ENCODE measurements at regions of chr18 and their contacts with region 1.

Region 1: DNA sequence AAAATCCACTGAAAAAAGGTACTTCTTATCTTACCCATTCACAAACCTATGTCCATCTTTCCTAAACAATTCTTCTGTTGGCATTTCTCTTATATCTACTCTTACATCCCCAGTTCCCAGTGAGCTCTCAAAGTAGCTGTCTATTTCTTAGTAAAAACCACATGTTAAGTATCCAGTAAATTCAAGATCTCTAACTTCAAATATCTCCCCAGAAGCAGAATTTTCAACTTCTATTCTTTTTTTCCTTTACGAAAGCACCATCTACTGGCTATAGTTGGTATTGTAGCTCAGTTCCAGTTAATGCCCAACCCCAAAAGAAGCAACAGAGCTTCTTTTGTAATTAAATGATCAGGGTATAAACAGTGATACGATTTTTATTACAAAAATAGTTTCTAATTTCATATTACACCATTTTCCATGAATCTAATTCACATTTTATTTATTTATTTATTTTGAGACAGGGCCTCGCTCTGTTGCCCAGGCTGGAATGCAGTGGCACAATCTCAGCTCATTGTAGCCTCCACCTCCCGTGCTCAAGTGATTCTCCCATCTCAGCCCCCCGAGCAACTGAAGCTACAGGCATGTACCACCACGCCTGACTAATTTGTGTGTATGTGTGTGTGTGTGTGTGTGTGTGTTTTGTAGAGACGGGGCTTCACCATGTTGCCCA is 28.5 kb downstream of the HRH4 start:
- DNase-seq: peak; percentile 57 to 76 (median 71)
- H3K4me3 ChIP-seq: no peak overlapping the region
- H3K27ac ChIP-seq: no peak overlapping the region
- H3K4me1 ChIP-seq: peaks cover 0 to 14% (median 12%) of the 10 kb centered on the region in 4 experiments
- H3K27me3 ChIP-seq: no peaks in the 10 kb centered on the region

Region 2: GRCh38 chr18:24176727-24177416 is 312.1 kb before region 1 on chr18:
- CTCF ChIA-PET with region 1: interaction called, 13 read pairs
- POLR2A ChIA-PET with region 1: no interaction called
- DNase-seq: peak; percentile 54 to 71 (median 67)
- H3K4me3 ChIP-seq: no peak overlapping the region
- H3K27ac ChIP-seq: no peak overlapping the region
- H3K4me1 ChIP-seq: peaks cover 0 to 2% (median 0%) of the 10 kb centered on the region in 4 experiments
- H3K27me3 ChIP-seq: no peaks in the 10 kb centered on the region

Region 3: DNA sequence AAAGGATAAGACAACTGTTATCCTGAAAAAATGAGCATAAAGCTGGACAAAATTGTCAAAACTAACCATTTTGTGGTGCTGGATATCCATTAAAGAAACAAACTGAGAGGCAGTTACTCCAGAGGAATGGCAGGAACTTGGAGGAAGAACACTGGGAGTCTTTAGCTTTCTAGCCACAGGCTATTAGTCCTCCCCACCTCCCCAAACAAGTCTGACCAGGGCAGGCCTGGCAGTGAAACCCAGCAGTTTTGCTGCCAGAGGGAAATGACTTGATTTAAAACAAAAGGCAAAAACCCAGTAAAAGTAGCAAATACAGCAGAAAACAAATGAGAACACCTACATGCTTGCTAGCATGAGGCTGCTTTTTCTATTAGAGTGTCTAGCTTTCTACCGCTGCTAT is 126.2 kb before region 1 on chr18:
- CTCF ChIA-PET with region 1: interaction called, 80 read pairs
- POLR2A ChIA-PET with region 1: no interaction called
- DNase-seq: no peak
- H3K4me3 ChIP-seq: no peak overlapping the region
- H3K27ac ChIP-seq: no peak overlapping the region
- H3K4me1 ChIP-seq: no peaks in the 10 kb centered on the region
- H3K27me3 ChIP-seq: no peaks in the 10 kb centered on the region

Region 4: GRCh38 chr18:24388957-24389356 is 100.0 kb before region 1 on chr18:
- CTCF ChIA-PET with region 1: no interaction called
- POLR2A ChIA-PET with region 1: no interaction called
- DNase-seq: no peak
- H3K4me3 ChIP-seq: no peak overlapping the region
- H3K27ac ChIP-seq: no peak overlapping the region
- H3K4me1 ChIP-seq: peaks cover 0 to 2% (median 0%) of the 10 kb centered on the region in 4 experiments
- H3K27me3 ChIP-seq: no peaks in the 10 kb centered on the region

Region 5: DNA sequence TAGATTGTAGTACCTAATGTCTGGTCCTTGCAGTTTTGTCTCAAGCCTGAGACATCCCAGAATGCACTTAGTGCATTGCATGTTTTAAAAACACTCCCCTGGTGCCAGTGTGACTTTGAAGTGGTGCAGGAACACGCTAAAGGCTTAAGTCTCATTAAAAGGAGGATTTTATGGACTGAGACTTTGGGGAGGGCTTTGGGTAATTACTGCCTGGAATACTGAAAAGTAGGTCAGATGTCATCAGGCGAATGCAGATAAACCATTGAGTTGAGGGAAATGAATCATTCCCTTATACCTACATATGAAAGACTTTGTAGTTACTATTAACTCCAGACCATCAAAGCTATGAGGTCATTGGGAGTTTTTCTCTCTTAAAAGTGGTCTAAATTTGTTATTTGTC is 88.4 kb before region 1 on chr18:
- CTCF ChIA-PET with region 1: no interaction called
- POLR2A ChIA-PET with region 1: no interaction called
- DNase-seq: no peak
- H3K4me3 ChIP-seq: no peak overlapping the region
- H3K27ac ChIP-seq: no peak overlapping the region
- H3K4me1 ChIP-seq: peaks cover 11 to 25% (median 18%) of the 10 kb centered on the region in 4 experiments
- H3K27me3 ChIP-seq: no peaks in the 10 kb centered on the region

Region 6: DNA sequence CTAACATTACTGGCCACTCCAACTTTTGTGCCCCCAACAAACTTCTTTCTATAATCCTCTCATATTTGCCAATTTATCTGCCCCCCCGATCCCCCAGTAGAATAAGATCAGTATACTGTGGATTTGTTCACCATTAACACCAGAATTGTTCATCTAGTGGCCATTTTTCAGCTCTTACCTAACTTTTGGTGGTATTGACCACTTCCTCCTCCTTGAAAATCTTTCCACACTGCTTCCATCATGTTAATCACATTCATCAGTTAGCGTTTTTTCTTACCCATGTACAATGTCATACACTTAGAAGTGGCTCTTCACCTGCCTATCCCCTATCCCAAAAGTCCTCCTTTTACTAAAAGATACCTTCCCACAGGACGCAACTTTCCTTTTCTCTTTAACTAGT is 56.3 kb before region 1 on chr18:
- CTCF ChIA-PET with region 1: interaction called, 12 read pairs
- POLR2A ChIA-PET with region 1: no interaction called
- DNase-seq: peak in 2 of 3 donors; percentile 29 to 35
- H3K4me3 ChIP-seq: no peak overlapping the region
- H3K27ac ChIP-seq: no peak overlapping the region
- H3K4me1 ChIP-seq: peaks cover 0 to 6% (median under 1%) of the 10 kb centered on the region in 4 experiments
- H3K27me3 ChIP-seq: no peaks in the 10 kb centered on the region

Region 7: DNA sequence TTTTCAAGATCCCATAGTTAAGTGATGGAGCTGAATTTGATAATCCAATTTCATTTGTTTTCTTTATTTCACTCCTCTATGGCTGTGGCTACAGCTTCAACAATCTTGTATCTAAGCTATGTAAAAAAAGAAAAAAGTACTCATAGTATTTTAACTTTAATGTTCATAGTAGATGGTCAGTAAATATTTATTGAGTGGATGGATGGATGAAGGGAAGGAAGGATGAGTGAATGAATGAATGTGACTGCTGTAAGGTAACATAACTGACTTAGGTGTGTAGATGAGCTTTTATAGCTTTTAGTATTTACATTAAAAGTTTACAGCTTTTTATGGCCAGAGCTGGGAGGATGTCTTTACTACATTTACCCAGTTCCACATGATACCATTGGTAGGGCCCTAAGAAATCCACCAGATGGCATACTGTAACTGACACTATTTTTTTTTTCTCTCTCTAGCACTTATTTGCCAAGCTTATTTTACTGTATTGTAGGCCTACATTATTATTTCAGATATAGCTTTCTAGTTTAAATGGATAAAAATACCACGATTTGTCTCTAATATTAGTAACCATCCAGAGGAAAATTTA is 41.9 kb before region 1 on chr18:
- CTCF ChIA-PET with region 1: interaction called, 21 read pairs
- POLR2A ChIA-PET with region 1: interaction called, 5 read pairs
- DNase-seq: peak in 2 of 3 donors; percentile 39 to 40
- H3K4me3 ChIP-seq: no peak overlapping the region
- H3K27ac ChIP-seq: no peak overlapping the region
- H3K4me1 ChIP-seq: peaks cover 0 to 14% (median 7%) of the 10 kb centered on the region in 4 experiments
- H3K27me3 ChIP-seq: no peaks in the 10 kb centered on the region

Region 8: GRCh38 chr18:24543805-24544498 is 55.0 kb after region 1 on chr18:
- CTCF ChIA-PET with region 1: interaction called, 13 read pairs
- POLR2A ChIA-PET with region 1: no interaction called
- DNase-seq: peak; percentile 22 to 52 (median 38)
- H3K4me3 ChIP-seq: no peak overlapping the region
- H3K27ac ChIP-seq: no peak overlapping the region
- H3K4me1 ChIP-seq: peaks cover 1 to 6% (median 3%) of the 10 kb centered on the region in 4 experiments
- H3K27me3 ChIP-seq: no peaks in the 10 kb centered on the region

Region 9: GRCh38 chr18:24600076-24600654 is 111.2 kb after region 1 on chr18:
- CTCF ChIA-PET with region 1: interaction called, 10 read pairs
- POLR2A ChIA-PET with region 1: no interaction called
- DNase-seq: peak; percentile 39 to 65 (median 59)
- H3K4me3 ChIP-seq: no peak overlapping the region
- H3K27ac ChIP-seq: no peak overlapping the region
- H3K4me1 ChIP-seq: no peaks in the 10 kb centered on the region
- H3K27me3 ChIP-seq: no peaks in the 10 kb centered on the region

Region 10: GRCh38 chr18:24695168-24695567 is 206.2 kb after region 1 on chr18:
- CTCF ChIA-PET with region 1: no interaction called
- POLR2A ChIA-PET with region 1: no interaction called
- DNase-seq: no peak
- H3K4me3 ChIP-seq: no peak overlapping the region
- H3K27ac ChIP-seq: no peak overlapping the region
- H3K4me1 ChIP-seq: no peaks in the 10 kb centered on the region
- H3K27me3 ChIP-seq: no peaks in the 10 kb centered on the region

Region 11: GRCh38 chr18:25042641-25043051 is 553.7 kb after region 1 on chr18:
- CTCF ChIA-PET with region 1: no interaction called
- POLR2A ChIA-PET with region 1: no interaction called
- DNase-seq: peak in 2 of 3 donors; percentile 21 to 24
- H3K4me3 ChIP-seq: no peak overlapping the region
- H3K27ac ChIP-seq: no peak overlapping the region
- H3K4me1 ChIP-seq: no peaks in the 10 kb centered on the region
- H3K27me3 ChIP-seq: no peaks in the 10 kb centered on the region